Mucosa of descending colon (tissue), 3 donors: ENCODE measurements at regions of chr4 and their contacts with region 1.

Region 1: GRCh38 chr4:48008021-48008596 is 8.4 kb downstream of the CNGA1 start:
- DNase-seq: no peak
- ATAC-seq: no peak
- H3K4me3 ChIP-seq: no peak overlapping the region
- H3K4me1 ChIP-seq: no peaks in the 10 kb centered on the region
- CTCF ChIP-seq: no peak

Region 2: DNA sequence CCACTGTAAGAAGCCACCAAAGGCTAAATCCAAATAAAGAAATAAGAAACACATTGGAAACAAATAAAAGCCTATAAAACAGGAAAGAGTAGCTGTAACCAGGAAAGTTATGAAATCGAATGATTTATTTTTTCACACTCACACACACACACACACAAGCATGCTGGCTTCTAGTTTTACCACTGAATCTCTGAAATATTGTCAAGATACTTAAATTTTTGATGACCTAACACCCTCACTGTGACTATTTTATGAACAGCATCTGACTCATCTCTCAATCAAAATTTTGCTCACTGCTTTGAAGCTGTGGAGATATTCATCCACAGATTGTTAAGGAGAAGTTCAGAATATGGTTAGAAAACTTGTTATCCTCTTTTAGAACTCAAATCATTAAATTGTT is 990.6 kb before region 1 on chr4:
- intact Hi-C with region 1: no loop called
- DNase-seq: no peak
- ATAC-seq: no peak
- H3K4me3 ChIP-seq: no peak overlapping the region
- H3K4me1 ChIP-seq: no peaks in the 10 kb centered on the region
- CTCF ChIP-seq: no peak

Region 3: GRCh38 chr4:47154816-47155370 is 853.2 kb before region 1 on chr4:
- intact Hi-C with region 1: no loop called
- DNase-seq: no peak
- ATAC-seq: no peak
- H3K4me3 ChIP-seq: no peak overlapping the region
- H3K4me1 ChIP-seq: no peaks in the 10 kb centered on the region
- CTCF ChIP-seq: no peak

Region 4: GRCh38 chr4:47876784-47877546 is 131.1 kb before region 1 on chr4:
- intact Hi-C with region 1: no loop called
- DNase-seq: no peak
- ATAC-seq: no peak
- H3K4me3 ChIP-seq: no peak overlapping the region
- H3K4me1 ChIP-seq: peaks cover 10% of the 10 kb centered on the region
- CTCF ChIP-seq: no peak

Region 5: GRCh38 chr4:48079972-48080391 is 71.9 kb after region 1 on chr4:
- intact Hi-C with region 1: loop called (anchors 10 kb)
- DNase-seq: no peak
- ATAC-seq: peak; percentile 45
- H3K4me3 ChIP-seq: no peak overlapping the region
- H3K4me1 ChIP-seq: no peaks in the 10 kb centered on the region
- CTCF ChIP-seq: no peak

Region 6: DNA sequence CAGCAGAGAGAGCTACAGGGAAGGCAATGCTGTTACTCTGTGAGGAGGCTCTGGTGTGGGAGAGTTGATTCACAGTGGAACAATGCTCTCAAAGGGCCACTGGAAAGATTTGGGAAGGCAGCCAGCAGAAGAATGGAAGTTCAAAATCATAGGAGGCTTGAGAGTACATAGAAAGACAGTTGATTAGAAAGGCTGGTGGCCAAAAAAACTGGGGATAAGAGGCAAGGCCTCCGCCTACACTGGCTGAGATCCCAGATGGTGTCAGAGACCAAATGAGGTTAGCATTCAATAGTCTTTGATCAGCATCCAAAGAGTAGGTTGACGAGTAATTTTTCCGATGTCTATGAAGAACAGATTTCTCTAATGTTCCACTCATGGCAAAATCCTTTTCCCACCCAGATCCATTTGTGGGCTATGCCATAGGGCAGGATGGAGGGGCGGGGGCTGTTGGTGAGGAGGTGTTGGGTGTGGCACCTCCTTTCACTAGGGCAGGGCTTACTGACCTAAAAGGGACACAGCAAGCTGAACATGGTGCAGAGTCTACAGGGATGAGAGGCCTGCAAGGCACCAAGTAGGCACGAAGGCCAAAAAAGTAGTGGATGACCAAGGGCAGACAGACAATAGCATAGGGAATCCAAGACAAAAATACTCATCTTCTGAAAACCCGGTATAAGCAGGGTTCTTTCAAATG is 246.4 kb after region 1 on chr4:
- intact Hi-C with region 1: no loop called
- DNase-seq: no peak
- ATAC-seq: no peak
- H3K4me3 ChIP-seq: no peak overlapping the region
- H3K4me1 ChIP-seq: no peaks in the 10 kb centered on the region
- CTCF ChIP-seq: no peak